ENCODE measurements at regions of chr2 and their contacts with region 1.

Region 1: DNA sequence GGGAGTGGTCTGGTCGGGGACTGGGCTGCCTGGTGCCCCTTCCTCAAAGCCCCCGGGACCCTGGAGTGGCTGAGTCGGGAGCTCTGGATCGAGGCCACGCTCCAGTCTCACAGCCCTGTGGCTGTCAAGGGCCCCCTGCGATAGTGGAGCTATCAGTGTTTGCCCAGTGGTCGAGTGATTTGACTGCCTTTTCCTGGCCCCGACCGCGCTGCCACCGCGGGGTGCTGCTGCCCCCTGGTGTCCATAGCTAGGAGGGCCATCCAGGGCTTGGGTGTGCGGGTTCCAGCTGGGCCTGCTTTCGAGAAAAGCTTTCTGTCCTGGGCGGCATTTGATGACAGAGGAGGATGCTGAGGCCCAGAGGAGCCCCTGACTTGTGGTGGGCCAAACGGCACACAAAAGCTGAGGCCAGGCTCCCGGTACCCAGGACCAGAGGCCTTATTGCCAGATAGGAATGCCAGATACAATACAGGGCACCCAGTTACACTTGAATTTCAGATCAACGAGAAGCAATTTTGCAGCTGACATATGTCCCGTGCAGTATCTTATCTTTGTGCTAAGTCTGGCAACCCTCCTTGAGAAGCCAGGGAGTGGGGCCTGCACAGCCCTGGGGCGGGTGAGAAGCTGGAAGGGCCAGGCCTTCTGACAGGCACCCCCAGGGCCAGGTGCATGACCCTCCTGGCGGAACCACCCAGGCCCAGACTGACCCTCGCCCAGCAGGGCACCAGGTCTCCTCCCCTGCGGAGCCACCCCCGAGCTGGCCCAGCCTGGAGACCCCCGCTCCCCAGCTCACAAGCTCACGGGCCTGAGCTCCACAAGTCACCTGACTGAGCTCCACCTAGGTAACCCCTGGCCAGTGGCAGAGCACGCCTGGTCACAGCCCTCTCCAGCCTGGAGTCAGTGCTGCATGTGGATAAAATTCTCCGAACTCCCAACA is 13.0 kb downstream of the ODC1 start:
- DNase-seq: peak; percentile 81
- ATAC-seq: peak; percentile 77
- H3K4me3 Mint-ChIP-seq: no peak overlapping the region
- H3K27ac Mint-ChIP-seq: no peak overlapping the region
- H3K4me1 Mint-ChIP-seq: peaks cover 11% of the 10 kb centered on the region
- H3K27me3 Mint-ChIP-seq: peaks cover 9% of the 10 kb centered on the region
- CTCF ChIP-seq: peak; percentile 88

Region 2: DNA sequence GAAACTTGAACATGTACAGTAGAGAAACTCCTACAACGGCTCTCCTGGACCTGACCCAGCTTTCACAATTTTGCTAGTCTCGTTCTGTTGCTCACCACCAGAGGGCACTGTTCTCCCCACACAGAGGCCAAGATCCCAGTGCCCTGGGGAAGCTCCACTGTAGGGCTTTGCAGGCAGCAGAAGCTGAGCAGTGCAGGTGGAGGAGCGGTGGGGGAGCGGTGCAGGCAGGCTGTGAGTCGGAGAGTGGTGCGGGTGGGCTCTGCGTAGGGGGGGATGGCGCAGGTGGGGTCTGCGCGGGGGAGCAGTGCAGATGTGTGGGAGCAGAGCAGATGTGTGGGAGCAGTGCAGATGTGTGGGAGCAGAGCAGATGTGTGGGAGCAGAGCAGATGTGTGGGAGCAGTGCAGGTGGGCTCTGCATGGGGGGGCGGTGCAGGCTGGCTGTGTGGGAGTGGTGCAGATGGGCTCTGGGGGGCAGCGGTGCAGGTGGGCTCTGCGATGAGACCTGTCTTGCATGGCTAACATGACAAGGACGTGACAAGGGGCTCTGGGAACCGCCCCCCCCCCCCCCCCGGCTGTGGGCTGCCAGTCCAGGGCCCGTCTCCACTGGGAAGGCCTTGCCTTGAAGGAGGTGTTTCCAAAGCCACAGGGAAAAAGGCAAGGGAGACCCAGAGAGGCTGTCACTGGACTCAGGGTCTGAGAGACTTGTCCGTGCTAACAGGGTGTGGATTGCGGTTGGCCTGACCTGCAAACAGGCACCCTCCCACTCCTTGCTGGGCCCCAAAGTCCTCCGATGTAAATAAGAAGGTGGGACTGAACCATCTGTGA is 362.3 kb before region 1 on chr2:
- CTCF ChIA-PET with region 1: interaction called, 131 read pairs
- POLR2A ChIA-PET with region 1: no interaction called
- intact Hi-C with region 1: loop called (anchors 2 kb)
- DNase-seq: peak; percentile 86
- ATAC-seq: peak; percentile 97
- H3K4me3 Mint-ChIP-seq: no peak overlapping the region
- H3K27ac Mint-ChIP-seq: no peak overlapping the region
- H3K4me1 Mint-ChIP-seq: peaks cover 8% of the 10 kb centered on the region
- H3K27me3 Mint-ChIP-seq: peaks cover 39% of the 10 kb centered on the region
- CTCF ChIP-seq: peak; percentile 86

Region 3: GRCh38 chr2:10122386-10123280 is 312.5 kb before region 1 on chr2 and contains the start of gene RRM2:
- CTCF ChIA-PET with region 1: interaction called, 46 read pairs
- POLR2A ChIA-PET with region 1: interaction called, 11 read pairs
- intact Hi-C with region 1: no loop called
- DNase-seq: peak; percentile 98
- ATAC-seq: peak; percentile 80
- H3K4me3 Mint-ChIP-seq: peak within 1 kb of the TSS; percentile 94
- H3K27ac Mint-ChIP-seq: peak within 1 kb of the TSS; percentile 98
- H3K4me1 Mint-ChIP-seq: peaks cover 37% of the 10 kb centered on the region
- H3K27me3 Mint-ChIP-seq: peaks cover 2% of the 10 kb centered on the region
- CTCF ChIP-seq: no peak
- total RNA-seq, gene RRM2: 368 to 396 TPM

Region 4: GRCh38 chr2:10141736-10142642 is 293.2 kb before region 1 on chr2:
- CTCF ChIA-PET with region 1: interaction called, 45 read pairs
- POLR2A ChIA-PET with region 1: interaction called, 8 read pairs
- intact Hi-C with region 1: loop called (anchors 5 kb)
- DNase-seq: peak; percentile 45
- ATAC-seq: peak; percentile 52
- H3K4me3 Mint-ChIP-seq: no peak overlapping the region
- H3K27ac Mint-ChIP-seq: no peak overlapping the region
- H3K4me1 Mint-ChIP-seq: peaks cover 22% of the 10 kb centered on the region
- H3K27me3 Mint-ChIP-seq: no peaks in the 10 kb centered on the region
- CTCF ChIP-seq: peak; percentile 38

Region 5: GRCh38 chr2:10267551-10268465 is 167.3 kb before region 1 on chr2:
- CTCF ChIA-PET with region 1: interaction called, 42 read pairs
- POLR2A ChIA-PET with region 1: no interaction called
- intact Hi-C with region 1: loop called (anchors 5 kb)
- DNase-seq: no peak
- ATAC-seq: no peak
- H3K4me3 Mint-ChIP-seq: no peak overlapping the region
- H3K27ac Mint-ChIP-seq: no peak overlapping the region
- H3K4me1 Mint-ChIP-seq: peaks cover 8% of the 10 kb centered on the region
- H3K27me3 Mint-ChIP-seq: no peaks in the 10 kb centered on the region
- CTCF ChIP-seq: no peak

Region 6: GRCh38 chr2:10408649-10409579 is 26.2 kb before region 1 on chr2:
- CTCF ChIA-PET with region 1: interaction called, 68 read pairs
- POLR2A ChIA-PET with region 1: interaction called, 5 read pairs
- intact Hi-C with region 1: no loop called
- DNase-seq: peak; percentile 89
- ATAC-seq: peak; percentile 69
- H3K4me3 Mint-ChIP-seq: peak overlapping the region; percentile 57
- H3K27ac Mint-ChIP-seq: peak overlapping the region; percentile 94
- H3K4me1 Mint-ChIP-seq: peaks cover 60% of the 10 kb centered on the region
- H3K27me3 Mint-ChIP-seq: no peaks in the 10 kb centered on the region
- CTCF ChIP-seq: peak; percentile 97

Region 7: DNA sequence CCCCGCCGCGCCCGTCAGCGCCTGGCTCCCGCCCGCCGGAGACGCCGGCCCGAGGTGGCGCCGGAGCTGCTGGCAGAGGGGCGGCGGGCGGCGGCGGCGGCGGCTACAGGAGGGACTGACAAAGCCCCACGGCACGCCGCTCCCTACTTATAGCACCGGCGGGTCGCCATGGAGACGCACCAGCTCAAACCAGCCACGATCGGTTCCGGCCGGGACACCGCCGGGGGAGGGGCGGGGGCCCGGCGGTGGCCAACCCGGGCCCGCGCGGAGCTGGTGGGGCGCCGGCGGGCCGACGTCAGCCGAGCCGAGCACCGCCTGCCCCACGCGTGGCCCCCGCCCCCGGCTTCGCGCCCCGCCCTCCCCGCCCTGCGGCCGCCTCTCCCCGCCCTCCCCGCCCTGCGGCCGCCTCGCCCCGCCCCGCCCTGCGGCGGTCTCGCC is 13.1 kb after region 1 on chr2 and contains the start of gene ODC1:
- CTCF ChIA-PET with region 1: interaction called, 51 read pairs
- POLR2A ChIA-PET with region 1: interaction called, 16 read pairs
- intact Hi-C with region 1: no loop called
- DNase-seq: peak; percentile 95
- ATAC-seq: peak; percentile 76
- H3K4me3 Mint-ChIP-seq: peak within 1 kb of the TSS; percentile 81
- H3K27ac Mint-ChIP-seq: peak within 1 kb of the TSS; percentile 94
- H3K4me1 Mint-ChIP-seq: peaks cover 47% of the 10 kb centered on the region
- H3K27me3 Mint-ChIP-seq: no peaks in the 10 kb centered on the region
- CTCF ChIP-seq: no peak
- total RNA-seq, gene ODC1: 180 to 181 TPM

Measured in activated CD8-positive, alpha-beta T cell treated with anti-CD3 and anti-CD28 coated beads for 36 hours (primary cell).